ENCODE measurements at regions of chr17 and their contacts with region 1.

Region 1: DNA sequence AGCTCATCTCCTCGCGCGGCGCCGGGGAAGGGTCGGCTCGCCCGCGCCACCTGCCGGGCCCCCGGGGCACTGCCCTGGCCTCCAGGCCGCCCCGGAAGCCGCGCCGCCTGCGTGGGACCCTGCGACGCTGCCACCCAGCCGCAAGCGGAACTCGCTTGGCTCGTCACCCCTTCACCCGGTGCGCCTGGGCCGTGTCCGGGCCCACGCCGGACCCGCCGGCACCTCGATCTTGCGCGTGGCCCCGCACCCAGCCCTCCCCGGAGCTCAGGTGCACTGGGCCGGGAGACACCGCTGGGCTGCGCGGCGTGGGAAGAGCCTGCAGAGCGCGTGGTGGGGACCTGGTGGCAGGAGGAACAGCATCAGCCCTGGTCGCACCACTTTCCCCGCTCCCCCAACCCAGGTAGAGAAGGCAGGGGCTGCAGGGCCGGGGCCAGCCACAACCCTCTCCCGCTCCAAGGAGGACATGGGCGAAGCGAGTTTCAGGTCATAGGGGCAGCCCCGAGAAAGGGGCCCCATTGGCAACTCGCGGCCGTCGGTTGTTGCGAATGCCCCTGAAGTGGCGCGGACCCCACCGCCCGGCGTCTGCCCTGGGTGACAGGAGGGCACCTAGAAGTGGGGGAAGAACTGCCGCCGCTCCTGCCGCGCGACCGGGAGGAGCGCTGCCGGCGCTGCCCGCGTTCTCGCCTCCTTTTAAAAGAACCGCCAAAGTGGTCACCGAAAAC is 363 bp upstream of the MIF4GD start:
- DNase-seq: no peak
- ATAC-seq: peak; percentile 72
- H3K4me3 ChIP-seq: peak overlapping the region; percentile 90 to 98
- H3K27ac ChIP-seq: peak overlapping the region; percentile 94
- H3K4me1 ChIP-seq: peaks cover 16 to 45% of the 10 kb centered on the region in 2 experiments
- H3K27me3 ChIP-seq: no peaks in the 10 kb centered on the region
- CTCF ChIP-seq: peak in 2 of 3 experiments; percentile 54 to 61; a peak in 4 of 6 replicates
- POLR2A ChIP-seq: peak; percentile 79
- RAD21 ChIP-seq: 0 out of 2 replicates have a peak, but pooled peaks have one; percentile 19

Region 2: DNA sequence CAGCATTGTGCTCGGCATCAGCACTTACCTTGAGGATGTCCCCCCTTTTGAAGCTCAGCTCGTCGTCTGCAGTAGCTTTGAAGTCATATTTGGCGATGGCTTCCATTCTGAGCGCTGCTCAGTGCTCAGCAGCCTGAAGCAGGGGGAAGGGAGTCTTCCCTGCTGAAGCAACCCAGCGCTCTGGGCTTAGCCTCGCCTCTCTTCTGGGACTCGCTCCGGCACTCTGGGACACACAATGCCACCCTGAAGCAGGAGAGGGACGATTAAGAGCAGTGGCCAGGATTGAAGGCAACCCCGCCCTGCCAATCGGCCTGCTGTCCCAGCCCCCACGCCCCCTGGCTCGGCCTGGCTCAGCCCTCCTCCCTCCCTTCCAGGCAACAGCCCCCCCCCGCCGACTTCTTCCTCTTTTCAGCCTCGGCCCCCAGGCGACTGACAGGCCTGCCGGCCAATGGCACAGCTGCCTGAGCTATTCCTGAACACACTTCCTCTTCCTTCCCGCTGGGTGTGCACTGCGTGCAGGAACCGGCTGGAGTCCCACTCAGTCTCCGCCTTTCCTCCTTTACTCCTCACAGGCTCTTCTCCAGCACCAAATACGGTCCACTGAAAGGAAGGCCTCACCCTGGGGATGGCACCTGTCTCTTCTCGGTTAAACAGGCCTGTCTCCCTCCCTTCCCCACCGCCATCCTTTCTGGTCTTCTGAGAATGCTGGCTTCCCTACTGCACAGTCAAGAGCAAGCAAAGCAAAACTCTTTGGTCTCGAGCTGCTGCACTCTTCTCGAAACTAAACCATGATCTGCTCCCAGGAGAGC is 122.3 kb after region 1 on chr17:
- CTCF ChIA-PET with region 1: interaction called, 10 read pairs
- POLR2A ChIA-PET with region 1: interaction called, 7 read pairs
- RAD21 ChIA-PET with region 1: no interaction called
- intact Hi-C with region 1: no loop called
- DNase-seq: peak; percentile 95
- ATAC-seq: peak; percentile 99
- H3K4me3 ChIP-seq: peak overlapping the region; percentile 50 to 75
- H3K27ac ChIP-seq: peak overlapping the region; percentile 60
- H3K4me1 ChIP-seq: peaks cover 23 to 30% of the 10 kb centered on the region in 2 experiments
- H3K27me3 ChIP-seq: no peaks in the 10 kb centered on the region
- CTCF ChIP-seq: no peak; a peak in 1 of 6 replicates
- POLR2A ChIP-seq: peak; percentile 52
- RAD21 ChIP-seq: no peak

Region 3: DNA sequence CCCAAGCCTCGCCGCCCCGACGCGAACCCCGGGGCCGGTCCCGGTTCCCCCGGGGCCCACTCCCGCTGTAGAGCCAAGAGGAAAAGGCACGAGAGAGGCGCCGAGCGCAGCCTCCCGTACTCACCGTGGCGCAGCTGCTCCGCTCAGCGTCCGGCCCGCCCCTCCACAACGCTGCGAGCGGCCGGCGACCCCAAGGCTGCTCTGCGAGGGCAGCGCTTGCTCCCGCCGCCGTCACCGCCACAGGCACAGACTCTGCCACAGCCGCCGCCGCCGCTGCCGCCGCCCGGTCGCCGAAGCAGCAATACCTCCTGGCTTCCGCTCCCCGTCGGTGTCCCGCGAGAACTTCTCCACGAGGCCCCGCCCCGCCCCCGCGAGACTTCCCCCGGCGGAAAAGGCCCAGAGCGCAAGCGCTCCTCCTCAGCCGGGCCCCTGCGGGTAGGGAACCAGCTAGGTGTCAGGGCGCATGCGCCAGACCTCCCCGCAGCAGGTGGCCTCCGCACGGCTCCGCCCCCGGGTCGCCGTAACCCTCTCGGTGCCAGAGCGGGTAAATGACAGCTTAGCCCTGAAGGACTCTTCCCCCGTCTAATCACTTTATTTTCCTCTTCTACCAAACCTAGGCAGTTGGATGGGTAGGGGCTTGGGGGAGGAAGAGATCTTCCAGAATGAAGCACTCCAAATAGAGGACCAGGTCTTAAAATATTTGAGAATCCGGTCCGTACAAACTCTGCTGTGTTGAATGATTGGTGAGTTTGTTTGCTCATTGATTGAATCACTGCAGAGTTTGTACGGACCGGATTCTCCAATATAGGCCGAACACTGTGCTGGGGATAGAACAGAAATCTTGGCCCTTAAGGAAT is 134.2 kb after region 1 on chr17 and contains the start of gene GRB2:
- CTCF ChIA-PET with region 1: interaction called, 12 read pairs
- POLR2A ChIA-PET with region 1: interaction called, 14 read pairs
- RAD21 ChIA-PET with region 1: interaction called in 1 of 2 experiments, 7 read pairs
- intact Hi-C with region 1: loop called (anchors 2 kb)
- DNase-seq: peak; percentile 94
- ATAC-seq: peak; percentile 92
- H3K4me3 ChIP-seq: peak within 1 kb of the TSS; percentile 97
- H3K27ac ChIP-seq: peak within 1 kb of the TSS; percentile 87
- H3K4me1 ChIP-seq: peaks cover 5 to 19% of the 10 kb centered on the region in 2 experiments
- H3K27me3 ChIP-seq: no peaks in the 10 kb centered on the region
- CTCF ChIP-seq: no peak
- POLR2A ChIP-seq: peak; percentile 68
- RAD21 ChIP-seq: no peak
- total RNA-seq, gene GRB2: 146 TPM

Region 4: DNA sequence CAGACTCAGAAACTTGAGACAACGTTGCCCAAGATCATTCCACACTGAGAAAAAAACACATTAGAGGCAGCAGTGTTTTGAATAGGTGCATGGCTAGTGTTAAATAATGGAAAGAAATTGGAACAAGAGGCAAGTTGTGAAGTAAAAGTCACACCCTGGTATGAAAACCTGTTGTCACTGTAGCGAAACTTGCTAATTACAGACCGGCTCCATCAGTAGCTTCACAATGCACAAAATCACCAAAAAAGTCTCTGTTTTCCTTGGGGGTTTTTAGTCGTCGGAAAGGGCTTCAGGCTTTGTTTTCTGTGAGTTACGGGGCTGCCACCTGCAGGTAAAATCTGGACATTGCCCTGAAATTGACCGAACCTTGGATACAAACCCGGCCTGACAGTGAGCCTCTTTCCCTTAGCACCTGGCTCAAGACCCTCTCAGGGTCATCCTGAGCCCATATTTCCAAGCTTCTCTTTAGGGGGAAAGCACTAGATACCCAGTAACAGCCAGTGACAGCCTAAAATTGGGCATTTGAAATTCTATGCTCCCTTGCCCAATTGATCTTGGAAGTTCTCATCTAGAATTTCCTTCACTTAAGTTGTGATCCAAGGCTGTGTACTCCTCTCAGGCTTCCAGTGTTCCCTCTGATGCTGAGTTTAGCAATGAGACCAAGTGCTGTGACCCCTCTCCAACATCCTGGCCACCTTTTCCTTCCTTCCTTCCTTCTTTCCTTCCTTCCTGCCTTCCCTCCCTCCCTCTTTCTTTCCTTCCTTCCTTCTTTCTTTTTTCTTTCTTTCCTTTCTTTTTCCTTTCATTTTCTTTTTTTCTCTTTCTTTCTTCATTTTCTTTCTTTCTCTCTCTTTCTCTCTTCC is 141.3 kb after region 1 on chr17:
- CTCF ChIA-PET with region 1: interaction called, 18 read pairs
- POLR2A ChIA-PET with region 1: interaction called, 5 read pairs
- RAD21 ChIA-PET with region 1: interaction called, 3 to 6 read pairs
- intact Hi-C with region 1: loop called (anchors 2 kb)
- DNase-seq: peak; percentile 75
- ATAC-seq: peak; percentile 93
- H3K4me3 ChIP-seq: peak overlapping the region; percentile 12 to 17; a peak in 2 of 4 replicates
- H3K27ac ChIP-seq: no peak overlapping the region
- H3K4me1 ChIP-seq: peaks cover 0 to 11% of the 10 kb centered on the region in 2 experiments; a peak in 2 of 4 replicates
- H3K27me3 ChIP-seq: peaks cover 5% of the 10 kb centered on the region; the same call in 1 of the 2 replicates
- CTCF ChIP-seq: peak; percentile 91 to 96 (median 91)
- POLR2A ChIP-seq: no peak
- RAD21 ChIP-seq: peak; percentile 99

Region 5: GRCh38 chr17:75515496-75516254 is 244.3 kb after region 1 on chr17 and contains the start of gene CASKIN2:
- CTCF ChIA-PET with region 1: interaction called, 8 read pairs
- POLR2A ChIA-PET with region 1: no interaction called
- RAD21 ChIA-PET with region 1: no interaction called
- intact Hi-C with region 1: loop called (anchors 5 kb)
- DNase-seq: peak; percentile 88
- ATAC-seq: peak; percentile 77
- H3K4me3 ChIP-seq: peak within 1 kb of the TSS; percentile 87 to 91
- H3K27ac ChIP-seq: peak within 1 kb of the TSS; percentile 86
- H3K4me1 ChIP-seq: peaks cover 28 to 60% of the 10 kb centered on the region in 2 experiments
- H3K27me3 ChIP-seq: no peaks in the 10 kb centered on the region
- CTCF ChIP-seq: peak; percentile 100
- POLR2A ChIP-seq: no peak
- RAD21 ChIP-seq: peak; percentile 94
- total RNA-seq, gene CASKIN2: 38.4 TPM

Measured in HCT116 (cell line).